WTC11 (cell line): ENCODE measurements at regions of chr5 and their contacts with region 1.

Region 1: GRCh38 chr5:114018186-114018585 is 343.7 kb upstream of the KCNN2 start:
- DNase-seq: no peak
- ATAC-seq: peak; percentile 90
- H3K4me3 Mint-ChIP-seq: no peak overlapping the region
- H3K27ac Mint-ChIP-seq: no peak overlapping the region
- H3K4me1 Mint-ChIP-seq: peaks cover 10% of the 10 kb centered on the region
- H3K27me3 Mint-ChIP-seq: no peaks in the 10 kb centered on the region
- CTCF ChIP-seq: no peak

Region 2: DNA sequence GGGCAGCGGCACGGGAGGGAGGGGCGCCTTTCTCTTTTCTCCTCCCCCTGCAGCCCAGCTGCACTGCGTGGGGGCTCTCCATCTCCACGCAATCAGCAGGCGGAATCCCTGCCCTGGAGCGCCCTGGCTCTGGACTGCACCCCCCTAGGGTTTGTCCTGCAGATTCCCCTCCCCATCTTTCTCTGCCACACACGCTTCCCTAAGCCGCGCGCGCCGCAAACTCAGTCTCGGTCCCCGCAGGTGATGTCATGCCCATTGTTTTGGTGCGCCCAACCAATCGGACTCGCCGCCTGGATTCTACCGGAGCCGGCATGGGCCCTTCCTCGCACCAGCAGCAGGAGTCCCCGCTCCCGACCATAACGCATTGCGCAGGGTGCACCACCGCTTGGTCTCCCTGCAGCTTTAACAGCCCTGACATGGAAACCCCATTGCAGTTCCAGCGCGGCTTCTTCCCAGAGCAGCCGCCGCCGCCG is 343.6 kb after region 1 on chr5 and contains the start of gene KCNN2:
- CTCF ChIA-PET with region 1: interaction called, 10 read pairs
- POLR2A ChIA-PET with region 1: no interaction called
- DNase-seq: peak; percentile 90
- ATAC-seq: peak; percentile 54
- H3K4me3 Mint-ChIP-seq: peak within 1 kb of the TSS; percentile 99
- H3K27ac Mint-ChIP-seq: peak within 1 kb of the TSS; percentile 100
- H3K4me1 Mint-ChIP-seq: peaks cover 43% of the 10 kb centered on the region
- H3K27me3 Mint-ChIP-seq: peaks cover 4% of the 10 kb centered on the region; the same call in 1 of the 2 replicates
- CTCF ChIP-seq: no peak
- total RNA-seq, gene KCNN2: 11.9 to 13.1 TPM (median 12.0 TPM) in 3 replicates